ENCODE measurements at regions of chr10 and their contacts with region 1.

Region 1: GRCh38 chr10:119859420-119860258 is 13.0 kb downstream of the MCMBP start:
- DNase-seq: no peak
- H3K4me3 ChIP-seq: no peak overlapping the region
- H3K27ac ChIP-seq: no peak overlapping the region
- H3K4me1 ChIP-seq: peaks cover 0 to 24% (median 4%) of the 10 kb centered on the region in 4 donors
- H3K27me3 ChIP-seq: no peaks in the 10 kb centered on the region
- CTCF ChIP-seq: peak; percentile 55 to 69 (median 66)
- EP300 ChIP-seq: no peak
- POLR2A ChIP-seq: no peak

Region 2: GRCh38 chr10:119686439-119687191 is 173.0 kb before region 1 on chr10:
- in situ Hi-C with region 1: loop called in 3 of 4 experiments (anchors 10 kb)
- intact Hi-C with region 1: no loop called
- DNase-seq: peak; percentile 82
- H3K4me3 ChIP-seq: peak overlapping the region in 1 of 4 donors; percentile 30
- H3K27ac ChIP-seq: no peak overlapping the region
- H3K4me1 ChIP-seq: peaks cover 0 to 3% (median 2%) of the 10 kb centered on the region in 4 donors
- H3K27me3 ChIP-seq: no peaks in the 10 kb centered on the region
- CTCF ChIP-seq: peak; percentile 91 to 95 (median 95)
- EP300 ChIP-seq: no peak
- POLR2A ChIP-seq: no peak

Region 3: DNA sequence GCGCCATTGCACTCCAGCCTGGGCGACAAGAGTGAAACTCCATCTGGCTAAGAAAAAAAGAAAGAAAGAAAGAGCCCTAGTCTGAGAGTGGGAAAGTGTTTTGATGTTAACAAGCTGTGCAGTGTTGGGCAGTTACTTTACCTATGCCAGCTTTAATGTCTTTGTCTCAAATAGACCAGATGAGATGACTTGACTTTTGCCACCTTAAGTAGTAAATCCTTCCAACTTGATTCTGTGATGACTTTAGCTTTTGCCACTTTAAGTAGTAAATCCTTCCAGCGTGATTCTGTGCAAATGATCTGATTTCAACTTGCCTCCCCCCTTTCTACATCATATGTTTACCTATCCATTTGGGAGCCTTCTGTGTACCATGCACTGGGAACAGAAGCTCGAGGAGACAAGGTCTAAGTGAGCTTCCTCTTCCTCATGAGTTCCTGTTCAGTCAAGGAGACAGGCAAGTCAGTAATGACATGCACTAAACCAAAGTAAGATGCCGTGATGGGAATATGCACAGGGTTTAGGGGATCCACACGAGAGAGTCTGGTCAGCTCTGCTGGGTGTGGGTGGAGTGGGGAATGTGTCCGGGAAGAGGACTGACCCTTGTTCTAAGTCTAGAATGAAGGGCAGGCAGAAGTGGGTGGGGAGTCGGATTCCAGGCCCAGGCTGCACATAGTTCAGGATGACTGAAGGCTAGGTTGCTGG is 116.5 kb before region 1 on chr10:
- in situ Hi-C with region 1: loop called in 1 of 4 experiments (anchors 10 kb)
- intact Hi-C with region 1: loop called (anchors 10 kb)
- DNase-seq: peak; percentile 20
- H3K4me3 ChIP-seq: no peak overlapping the region
- H3K27ac ChIP-seq: no peak overlapping the region
- H3K4me1 ChIP-seq: peaks cover 3 to 13% (median 7%) of the 10 kb centered on the region in 4 donors
- H3K27me3 ChIP-seq: no peaks in the 10 kb centered on the region
- CTCF ChIP-seq: no peak
- EP300 ChIP-seq: no peak
- POLR2A ChIP-seq: no peak

Region 4: DNA sequence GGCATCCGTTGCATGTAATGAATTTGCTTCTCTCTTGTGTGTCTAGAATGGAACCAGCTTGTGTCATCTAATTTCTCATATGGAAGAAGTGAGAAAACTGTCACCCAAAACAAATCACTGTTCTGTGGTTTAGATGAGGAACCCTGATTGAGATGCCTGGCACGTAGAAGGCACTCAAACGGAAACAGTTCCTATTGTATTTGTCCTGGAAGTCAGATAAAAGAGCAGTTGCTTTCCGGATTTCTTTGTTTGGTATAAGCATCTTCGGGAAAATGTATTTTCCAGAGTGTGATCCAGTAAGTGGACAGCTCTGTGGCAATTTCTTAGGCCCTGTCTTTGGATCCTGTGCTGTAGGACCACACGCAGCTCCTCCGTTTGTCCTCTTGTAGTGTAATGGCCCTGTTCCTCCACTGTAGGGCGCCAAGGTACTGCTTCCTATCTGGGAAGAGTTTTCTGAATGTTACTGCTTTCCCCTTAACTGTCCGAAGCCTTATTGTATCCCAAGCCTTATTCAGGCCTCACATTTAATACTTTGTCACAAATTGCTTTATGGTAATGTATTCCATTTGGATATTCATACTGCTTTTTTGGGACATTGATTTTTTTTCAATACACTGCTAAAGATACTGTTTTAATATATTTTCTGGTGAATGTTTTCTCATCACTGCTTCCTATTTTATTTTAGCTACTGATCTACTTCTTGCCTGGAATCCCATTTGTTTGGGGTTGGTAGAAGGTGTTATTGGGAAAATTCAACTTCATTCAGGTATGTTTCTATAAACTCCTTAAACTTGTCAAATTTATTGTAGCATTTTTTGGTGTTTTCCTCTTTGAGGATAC is 109.0 kb before region 1 on chr10:
- in situ Hi-C with region 1: loop called in 3 of 4 experiments (anchors 10 to 25 kb)
- intact Hi-C with region 1: loop called (anchors 10 kb)
- DNase-seq: peak; percentile 68
- H3K4me3 ChIP-seq: no peak overlapping the region
- H3K27ac ChIP-seq: no peak overlapping the region
- H3K4me1 ChIP-seq: no peaks in the 10 kb centered on the region
- H3K27me3 ChIP-seq: no peaks in the 10 kb centered on the region
- CTCF ChIP-seq: peak; percentile 82 to 90 (median 85)
- EP300 ChIP-seq: no peak
- POLR2A ChIP-seq: no peak

Region 5: GRCh38 chr10:119834188-119834587 is 25.5 kb before region 1 on chr10:
- in situ Hi-C with region 1: no loop called
- intact Hi-C with region 1: loop called (anchors 1 kb)
- DNase-seq: no peak
- H3K4me3 ChIP-seq: no peak overlapping the region
- H3K27ac ChIP-seq: no peak overlapping the region
- H3K4me1 ChIP-seq: no peaks in the 10 kb centered on the region
- H3K27me3 ChIP-seq: no peaks in the 10 kb centered on the region
- CTCF ChIP-seq: no peak
- EP300 ChIP-seq: no peak
- POLR2A ChIP-seq: no peak

Region 6: GRCh38 chr10:119908166-119908565 is 48.5 kb after region 1 on chr10:
- in situ Hi-C with region 1: no loop called
- intact Hi-C with region 1: no loop called
- DNase-seq: no peak
- H3K4me3 ChIP-seq: no peak overlapping the region
- H3K27ac ChIP-seq: no peak overlapping the region
- H3K4me1 ChIP-seq: no peaks in the 10 kb centered on the region
- H3K27me3 ChIP-seq: no peaks in the 10 kb centered on the region
- CTCF ChIP-seq: no peak
- EP300 ChIP-seq: no peak
- POLR2A ChIP-seq: no peak